ENCODE measurements at regions of chr10 and their contacts with region 1.

Region 1: GRCh38 chr10:114103284-114103683 is 59.6 kb downstream of the ADRB1 start:
- H3K4me3 ChIP-seq: no peak overlapping the region
- H3K27ac ChIP-seq: no peak overlapping the region
- H3K4me1 ChIP-seq: no peaks in the 10 kb centered on the region
- CTCF ChIP-seq: no peak

Region 2: GRCh38 chr10:113704637-113705343 is 398.5 kb before region 1 on chr10:
- CTCF ChIA-PET with region 1: interaction called, 12 read pairs
- POLR2A ChIA-PET with region 1: no interaction called
- H3K4me3 ChIP-seq: no peak overlapping the region
- H3K27ac ChIP-seq: no peak overlapping the region
- H3K4me1 ChIP-seq: peaks cover 13% of the 10 kb centered on the region
- CTCF ChIP-seq: no peak

Region 3: GRCh38 chr10:113980407-113981087 is 122.7 kb before region 1 on chr10:
- CTCF ChIA-PET with region 1: no interaction called
- POLR2A ChIA-PET with region 1: no interaction called
- H3K4me3 ChIP-seq: no peak overlapping the region
- H3K27ac ChIP-seq: no peak overlapping the region
- H3K4me1 ChIP-seq: no peaks in the 10 kb centered on the region
- CTCF ChIP-seq: peak; percentile 38; the same call in 1 of the 2 replicates

Region 4: DNA sequence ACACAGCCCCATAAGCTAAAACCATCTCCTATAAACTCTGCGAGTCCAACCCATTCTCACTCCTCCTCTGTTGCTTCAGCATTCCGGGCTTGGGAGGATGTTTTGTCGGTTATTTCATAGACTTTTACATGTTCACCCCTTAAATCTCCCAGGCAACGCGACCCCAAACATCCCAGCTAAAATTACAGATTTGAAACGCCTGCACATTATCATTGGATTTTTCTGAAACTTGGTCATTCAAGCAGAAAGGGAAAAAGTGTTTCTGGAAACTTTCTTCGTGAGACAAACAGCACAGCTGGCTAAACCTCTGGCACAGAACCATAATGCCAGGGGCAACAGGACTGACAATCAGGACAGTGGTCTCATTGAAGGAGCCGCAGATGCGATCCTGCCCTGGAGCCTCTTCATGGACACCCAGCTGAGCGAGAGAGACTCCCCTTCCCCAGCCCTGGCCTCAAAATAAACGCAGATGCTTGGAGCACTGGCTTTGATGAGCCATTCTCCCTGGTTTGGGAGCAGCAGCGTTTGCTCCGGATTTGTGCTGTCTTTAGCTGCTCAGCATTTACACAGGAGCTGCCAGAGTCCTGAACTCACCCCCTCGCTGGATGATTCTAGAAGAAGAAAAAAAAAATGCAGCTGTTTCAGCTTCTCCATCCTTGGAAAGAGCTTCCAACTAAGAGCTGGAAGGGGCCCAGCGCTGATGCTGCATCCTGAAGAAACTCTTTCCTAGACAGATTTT is 270.9 kb after region 1 on chr10:
- CTCF ChIA-PET with region 1: no interaction called
- POLR2A ChIA-PET with region 1: no interaction called
- H3K4me3 ChIP-seq: no peak overlapping the region
- H3K27ac ChIP-seq: no peak overlapping the region
- H3K4me1 ChIP-seq: 0 out of 2 replicates have a peak, but pooled peaks cover 2% of the 10 kb centered on the region
- CTCF ChIP-seq: no peak